Naive thymus-derived CD4-positive, alpha-beta T cell (primary cell): ENCODE measurements at regions of chr11 and their contacts with region 1.

Region 1: GRCh38 chr11:47407746-47408590 is at the start of gene SLC39A13:
- DNase-seq: peak; percentile 80 to 99 (median 88)
- ATAC-seq: peak; percentile 91
- H3K4me3 ChIP-seq: peak within 1 kb of the TSS; percentile 71
- H3K4me3 Mint-ChIP-seq: peak within 1 kb of the TSS; percentile 87 to 99 (median 91)
- H3K27ac ChIP-seq: peak within 1 kb of the TSS; percentile 83
- H3K27ac Mint-ChIP-seq: peak within 1 kb of the TSS; percentile 90 to 98 (median 94)
- H3K4me1 ChIP-seq: peaks cover 8 to 13% of the 10 kb centered on the region in 2 donors
- H3K4me1 Mint-ChIP-seq: peaks cover 4 to 23% (median 21%) of the 10 kb centered on the region in 7 donors
- H3K27me3 ChIP-seq: no peaks in the 10 kb centered on the region
- H3K27me3 Mint-ChIP-seq: no peaks in the 10 kb centered on the region
- total RNA-seq, gene SLC39A13: 29.9 to 60.4 (median 45.1) TPM

Region 2: GRCh38 chr11:46936138-46937110 is 471.5 kb before region 1 on chr11 and contains the start of gene CSTPP1:
- CTCF ChIA-PET with region 1: no interaction called
- POLR2A ChIA-PET with region 1: no interaction called
- intact Hi-C with region 1: loop called (anchors 1 to 2 kb)
- DNase-seq: peak; percentile 80 to 92 (median 89)
- ATAC-seq: peak; percentile 99
- H3K4me3 ChIP-seq: peak within 1 kb of the TSS; percentile 76
- H3K4me3 Mint-ChIP-seq: peak within 1 kb of the TSS; percentile 86 to 100 (median 92)
- H3K27ac ChIP-seq: peak within 1 kb of the TSS; percentile 72
- H3K27ac Mint-ChIP-seq: peak within 1 kb of the TSS; percentile 89 to 98 (median 92)
- H3K4me1 ChIP-seq: peaks cover 0 to 11% of the 10 kb centered on the region in 2 donors
- H3K4me1 Mint-ChIP-seq: peaks cover 5 to 24% (median 21%) of the 10 kb centered on the region in 7 donors
- H3K27me3 ChIP-seq: no peaks in the 10 kb centered on the region
- H3K27me3 Mint-ChIP-seq: peaks cover 8 to 19% (median 9%) of the 10 kb centered on the region in 5 donors
- total RNA-seq, gene CSTPP1: 9.3 to 18.6 (median 16.1) TPM

Region 3: GRCh38 chr11:47329987-47330931 is 77.7 kb before region 1 on chr11:
- CTCF ChIA-PET with region 1: no interaction called
- POLR2A ChIA-PET with region 1: interaction called, 3 read pairs
- intact Hi-C with region 1: loop called in 1 of 2 experiments (anchors 1 kb)
- DNase-seq: peak in 2 of 9 donors; percentile 11 to 13
- ATAC-seq: no peak
- H3K4me3 ChIP-seq: no peak overlapping the region
- H3K4me3 Mint-ChIP-seq: no peak overlapping the region
- H3K27ac ChIP-seq: no peak overlapping the region
- H3K27ac Mint-ChIP-seq: peak overlapping the region in 4 of 9 donors; percentile 5 to 67 (median 51)
- H3K4me1 ChIP-seq: no peaks in the 10 kb centered on the region
- H3K4me1 Mint-ChIP-seq: no peaks in the 10 kb centered on the region
- H3K27me3 ChIP-seq: no peaks in the 10 kb centered on the region
- H3K27me3 Mint-ChIP-seq: no peaks in the 10 kb centered on the region

Region 4: GRCh38 chr11:47394322-47395222 is 13.4 kb before region 1 on chr11:
- CTCF ChIA-PET with region 1: interaction called, 7 read pairs
- POLR2A ChIA-PET with region 1: interaction called, 41 read pairs
- intact Hi-C with region 1: loop called (anchors 1 kb)
- DNase-seq: peak in 6 of 9 donors; percentile 32 to 61 (median 46)
- ATAC-seq: peak; percentile 67
- H3K4me3 ChIP-seq: peak overlapping the region; percentile 70
- H3K4me3 Mint-ChIP-seq: peak overlapping the region; percentile 52 to 77 (median 72)
- H3K27ac ChIP-seq: peak overlapping the region; percentile 81
- H3K27ac Mint-ChIP-seq: peak overlapping the region; percentile 85 to 96 (median 92)
- H3K4me1 ChIP-seq: peaks cover 26 to 41% of the 10 kb centered on the region in 2 donors
- H3K4me1 Mint-ChIP-seq: peaks cover 16 to 65% (median 54%) of the 10 kb centered on the region in 7 donors
- H3K27me3 ChIP-seq: no peaks in the 10 kb centered on the region
- H3K27me3 Mint-ChIP-seq: no peaks in the 10 kb centered on the region